ENCODE measurements at regions of chr6 and their contacts with region 1.

Region 1: GRCh38 chr6:110682460-110682853 is 132.8 kb downstream of the CDK19 start:
- DNase-seq: peak; percentile 23
- ATAC-seq: peak; percentile 88
- H3K4me3 Mint-ChIP-seq: no peak overlapping the region
- H3K27ac Mint-ChIP-seq: no peak overlapping the region
- H3K4me1 Mint-ChIP-seq: peaks cover 2% of the 10 kb centered on the region; the same call in 1 of the 2 replicates
- H3K27me3 Mint-ChIP-seq: no peaks in the 10 kb centered on the region
- CTCF ChIP-seq: peak; percentile 63

Region 2: DNA sequence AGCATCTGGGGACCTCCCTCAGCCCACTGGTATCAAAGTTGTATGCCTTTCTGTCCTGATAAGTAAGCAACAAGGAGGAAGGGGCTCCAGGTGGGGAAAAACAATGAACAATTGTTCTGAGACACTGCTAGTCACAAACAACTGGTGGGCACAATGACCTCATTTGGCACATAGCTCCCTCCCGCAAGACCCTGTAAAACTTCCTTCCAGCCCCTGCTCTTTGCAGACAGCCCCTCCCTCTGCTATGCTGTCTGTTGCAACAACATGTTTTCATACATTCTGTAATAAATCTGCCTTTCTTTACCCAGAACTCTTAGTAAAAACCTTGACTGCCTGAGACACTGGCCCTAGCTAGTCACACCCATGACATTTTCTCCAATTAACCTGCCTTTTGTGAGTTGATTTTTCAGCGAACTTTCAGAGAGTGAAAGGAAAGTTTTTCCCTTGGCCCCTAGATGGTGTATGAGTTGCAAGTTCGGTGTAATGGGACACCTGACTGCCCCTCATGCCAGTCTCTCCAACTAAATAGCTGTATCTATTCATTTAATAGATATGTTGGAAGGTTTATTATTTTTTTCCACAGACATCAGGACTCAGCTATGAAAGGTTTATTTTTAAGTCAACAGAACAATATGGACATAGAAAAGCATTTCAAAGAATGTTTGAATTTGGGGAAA is 63.7 kb before region 1 on chr6:
- CTCF ChIA-PET with region 1: interaction called, 13 read pairs
- POLR2A ChIA-PET with region 1: no interaction called
- DNase-seq: no peak
- ATAC-seq: peak; percentile 87
- H3K4me3 Mint-ChIP-seq: no peak overlapping the region
- H3K27ac Mint-ChIP-seq: peak overlapping the region; percentile 71
- H3K4me1 Mint-ChIP-seq: peaks cover 25% of the 10 kb centered on the region
- H3K27me3 Mint-ChIP-seq: no peaks in the 10 kb centered on the region
- CTCF ChIP-seq: no peak

Region 3: DNA sequence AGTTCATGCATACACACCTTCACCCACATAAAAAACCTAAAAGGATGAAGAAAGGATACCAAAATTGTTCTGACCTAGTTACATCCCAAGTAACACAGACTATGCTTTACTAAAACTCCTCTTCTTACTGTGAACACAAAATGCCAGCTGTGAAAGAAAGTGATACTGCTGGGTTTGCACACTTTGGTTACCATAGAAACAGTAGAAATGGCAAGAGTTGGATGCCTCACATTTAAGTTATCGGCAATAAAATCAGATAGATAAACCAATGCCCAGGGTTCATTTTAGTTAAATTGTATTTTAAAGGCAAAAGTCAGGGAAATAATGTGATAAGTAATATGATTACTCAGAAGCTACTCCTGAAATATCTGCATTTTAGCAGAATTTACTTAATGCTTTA is 29.1 kb before region 1 on chr6:
- CTCF ChIA-PET with region 1: no interaction called
- POLR2A ChIA-PET with region 1: no interaction called
- DNase-seq: no peak
- ATAC-seq: no peak
- H3K4me3 Mint-ChIP-seq: no peak overlapping the region
- H3K27ac Mint-ChIP-seq: no peak overlapping the region
- H3K4me1 Mint-ChIP-seq: peaks cover 19% of the 10 kb centered on the region
- H3K27me3 Mint-ChIP-seq: no peaks in the 10 kb centered on the region
- CTCF ChIP-seq: no peak

Measured in WTC11 (cell line).